ENCODE measurements at regions of chr3 and their contacts with region 1.

Region 1: DNA sequence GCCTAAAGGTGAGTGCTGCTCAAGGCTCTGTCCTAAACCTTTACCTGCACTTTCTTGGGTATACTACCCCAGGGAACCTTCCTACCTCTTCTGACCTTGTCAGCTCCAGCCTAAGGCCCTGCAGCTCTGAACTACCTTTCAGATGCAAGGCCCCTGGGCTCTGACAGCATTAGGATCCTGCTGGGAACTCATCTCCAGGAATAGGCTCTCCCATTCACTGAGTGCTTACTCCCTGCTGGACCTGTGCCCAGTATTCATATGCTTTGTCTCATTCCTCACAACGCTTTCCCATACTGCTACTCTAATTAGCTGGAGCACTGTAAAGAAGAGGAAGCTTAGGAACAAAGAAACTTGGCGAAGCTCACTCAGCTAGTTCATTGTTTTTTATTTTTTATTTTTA is 53.8 kb upstream of the RAB6B start:
- DNase-seq: peak; percentile 25
- ATAC-seq: peak; percentile 92
- H3K4me3 Mint-ChIP-seq: no peak overlapping the region
- H3K27ac Mint-ChIP-seq: no peak overlapping the region
- H3K4me1 Mint-ChIP-seq: peaks cover 31% of the 10 kb centered on the region
- H3K27me3 Mint-ChIP-seq: peaks cover 32% of the 10 kb centered on the region
- CTCF ChIP-seq: no peak

Region 2: DNA sequence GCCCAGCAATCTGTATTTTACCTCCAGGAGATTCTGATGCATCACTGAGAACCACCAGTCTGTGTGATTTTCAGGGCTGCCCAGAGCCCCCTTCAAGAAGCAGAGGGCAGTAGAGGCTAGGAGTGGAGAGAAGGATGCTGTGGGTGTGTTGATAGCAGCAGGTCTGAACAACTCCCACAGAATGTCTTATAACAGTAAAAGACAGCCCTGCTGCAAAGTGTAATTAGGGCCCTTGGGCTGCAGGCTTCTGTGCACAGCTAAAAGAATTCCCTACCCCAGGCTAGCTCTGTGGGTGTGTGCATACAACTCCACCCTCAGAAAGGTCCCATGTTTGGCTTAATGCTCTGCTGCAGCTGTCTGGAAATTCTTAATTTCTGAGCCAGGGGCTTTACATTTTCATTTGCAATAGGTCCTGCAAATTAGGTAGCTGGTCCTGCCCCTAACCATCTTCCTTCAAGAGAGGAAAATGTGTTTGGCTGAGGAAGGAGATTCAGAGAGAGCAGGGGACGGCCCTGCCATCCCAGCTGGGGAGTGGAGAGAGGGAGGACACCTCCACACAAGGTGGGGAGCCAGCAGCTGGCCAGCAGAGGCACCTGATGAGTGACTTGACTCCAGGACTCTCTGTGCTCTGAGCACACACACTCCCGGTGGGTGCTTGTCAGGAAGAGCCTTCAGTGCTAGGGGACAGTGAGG is 10.5 kb before region 1 on chr3:
- CTCF ChIA-PET with region 1: no interaction called
- POLR2A ChIA-PET with region 1: no interaction called
- DNase-seq: no peak
- ATAC-seq: no peak
- H3K4me3 Mint-ChIP-seq: no peak overlapping the region
- H3K27ac Mint-ChIP-seq: no peak overlapping the region
- H3K4me1 Mint-ChIP-seq: peaks cover 22% of the 10 kb centered on the region
- H3K27me3 Mint-ChIP-seq: no peaks in the 10 kb centered on the region
- CTCF ChIP-seq: no peak

Region 3: GRCh38 chr3:133964547-133964946 is 15.1 kb after region 1 on chr3:
- CTCF ChIA-PET with region 1: interaction called, 12 read pairs
- POLR2A ChIA-PET with region 1: no interaction called
- DNase-seq: peak; percentile 24
- ATAC-seq: peak; percentile 70
- H3K4me3 Mint-ChIP-seq: no peak overlapping the region
- H3K27ac Mint-ChIP-seq: no peak overlapping the region
- H3K4me1 Mint-ChIP-seq: peaks cover 19% of the 10 kb centered on the region
- H3K27me3 Mint-ChIP-seq: no peaks in the 10 kb centered on the region
- CTCF ChIP-seq: no peak

Region 4: DNA sequence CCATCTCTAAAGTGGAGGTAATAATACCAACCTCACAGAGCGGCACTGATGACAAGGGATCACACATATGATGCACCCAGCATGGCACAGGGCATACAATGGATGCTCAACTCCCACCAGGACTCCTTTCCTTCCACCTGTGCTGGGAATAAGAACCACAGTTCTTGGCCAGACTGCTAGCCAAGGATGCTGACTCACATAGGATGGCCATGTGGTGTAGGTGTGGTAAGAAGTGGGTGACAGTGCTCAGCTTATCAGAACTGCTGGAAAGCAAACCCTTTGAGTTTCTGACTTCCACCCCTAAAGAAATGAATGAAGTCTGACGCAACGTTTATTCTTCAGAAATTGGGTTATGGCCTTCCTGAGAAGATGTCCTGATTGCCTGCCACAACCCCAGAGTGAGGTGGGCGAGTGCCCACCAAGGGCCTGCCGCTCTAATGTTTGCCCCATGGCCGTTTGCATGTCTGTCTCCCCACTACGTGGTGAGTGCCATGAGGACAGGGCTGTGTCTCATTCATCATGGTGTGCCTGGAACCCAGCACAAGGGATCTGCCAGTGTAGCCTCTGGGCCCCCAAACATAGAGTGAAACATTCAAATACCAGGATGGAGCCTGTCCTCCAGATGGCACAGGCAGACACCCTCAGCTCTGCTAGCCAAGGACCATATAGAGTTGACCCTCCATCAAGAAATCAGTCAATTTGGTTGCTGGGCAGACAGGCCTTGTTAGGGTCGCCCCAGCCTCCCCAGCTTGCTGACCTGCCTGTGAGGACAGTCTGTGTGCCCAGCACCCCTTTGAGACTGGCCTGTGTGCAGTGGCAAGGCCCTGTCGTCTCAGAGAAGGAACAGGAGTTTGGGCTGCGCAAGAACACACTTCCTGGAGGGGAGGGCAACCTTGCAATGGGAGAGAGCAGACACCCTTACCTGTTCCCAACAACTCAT is 137.9 kb after region 1 on chr3:
- CTCF ChIA-PET with region 1: no interaction called
- POLR2A ChIA-PET with region 1: no interaction called
- DNase-seq: no peak
- ATAC-seq: no peak
- H3K4me3 Mint-ChIP-seq: no peak overlapping the region
- H3K27ac Mint-ChIP-seq: no peak overlapping the region
- H3K4me1 Mint-ChIP-seq: no peaks in the 10 kb centered on the region
- H3K27me3 Mint-ChIP-seq: no peaks in the 10 kb centered on the region; the same call in 1 of the 2 replicates
- CTCF ChIP-seq: no peak